ENCODE measurements at regions of chr11 and their contacts with region 1.

Region 1: DNA sequence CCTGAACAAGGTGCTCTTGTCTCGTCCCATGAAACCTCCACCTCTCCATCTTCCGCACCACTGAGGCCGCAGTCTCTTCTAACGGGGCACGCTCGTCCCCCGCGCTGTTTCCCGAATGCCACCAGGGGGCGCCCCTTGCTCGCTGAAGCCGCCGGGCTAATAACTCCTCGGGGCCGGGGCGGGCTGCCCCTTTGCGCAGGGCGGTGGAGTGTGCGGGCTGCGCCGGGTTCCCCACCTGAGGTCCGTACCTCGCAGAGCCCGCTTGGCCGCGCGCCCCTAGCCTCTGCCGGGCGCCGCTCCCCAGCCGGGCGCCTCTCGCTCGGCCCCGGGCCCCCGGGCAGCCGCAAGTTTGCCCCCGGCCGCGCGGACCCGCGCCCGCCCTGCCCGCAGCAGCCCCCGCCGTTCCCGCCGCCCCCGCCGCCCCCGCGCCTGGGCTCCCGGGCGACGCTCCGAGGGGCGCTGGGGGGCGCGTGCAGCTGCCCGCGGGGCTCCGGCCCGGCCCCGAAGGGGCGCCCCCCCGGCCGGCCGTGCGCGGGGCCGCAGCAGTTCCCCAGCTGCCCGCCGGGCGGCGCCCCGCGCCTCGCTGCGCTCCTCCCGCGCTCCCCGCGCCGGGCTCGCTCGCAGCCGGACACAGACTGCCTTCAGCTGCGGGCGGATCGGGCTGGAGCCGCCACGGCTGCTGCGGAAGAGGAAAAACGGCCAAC is at the start of gene GRIK4:
- ATAC-seq: peak; percentile 88 to 95 (median 92)
- H3K4me3 ChIP-seq: peak within 1 kb of the TSS; percentile 53 to 73 (median 63)
- H3K27ac ChIP-seq: peak within 1 kb of the TSS; percentile 39 to 67
- H3K4me1 ChIP-seq: peaks cover 13 to 15% of the 10 kb centered on the region in 2 donors
- total RNA-seq, gene GRIK4: 0.75 to 11.1 (median 1.7) TPM

Region 2: DNA sequence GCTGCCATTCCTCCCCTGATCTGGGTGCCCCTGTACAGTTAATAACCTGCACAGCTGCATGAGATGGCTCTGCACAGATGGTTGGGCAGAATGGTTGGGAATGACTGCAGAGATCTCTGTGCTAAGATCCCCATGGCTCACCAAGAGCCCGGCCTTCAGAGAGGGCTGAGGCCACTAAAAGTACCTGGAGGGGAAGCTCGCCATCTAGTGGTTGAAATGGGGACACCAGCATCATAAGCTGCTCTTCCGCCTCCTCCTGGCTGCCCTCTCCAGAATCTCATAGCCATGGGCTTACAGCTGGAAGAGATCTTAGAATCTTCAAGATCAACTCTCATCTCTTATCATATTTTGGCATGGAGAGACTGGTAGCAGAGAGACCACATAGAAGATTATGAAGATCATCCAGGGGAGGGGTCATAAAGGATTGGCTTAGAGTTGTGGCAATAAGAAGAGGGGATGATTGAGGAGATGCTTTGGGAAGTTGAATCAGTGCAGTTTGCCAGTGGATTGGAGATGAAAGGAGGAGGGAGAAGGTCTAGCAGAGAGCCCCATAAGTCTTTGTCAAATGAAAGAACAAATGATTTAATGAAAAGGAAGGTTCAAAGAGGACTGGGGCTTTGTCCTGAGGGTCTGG is 208.1 kb before region 1 on chr11:
- in situ Hi-C with region 1: no loop called
- ATAC-seq: peak; percentile 8 to 72 (median 42)
- H3K4me3 ChIP-seq: no peak overlapping the region
- H3K27ac ChIP-seq: no peak overlapping the region
- H3K4me1 ChIP-seq: no peaks in the 10 kb centered on the region

Region 3: DNA sequence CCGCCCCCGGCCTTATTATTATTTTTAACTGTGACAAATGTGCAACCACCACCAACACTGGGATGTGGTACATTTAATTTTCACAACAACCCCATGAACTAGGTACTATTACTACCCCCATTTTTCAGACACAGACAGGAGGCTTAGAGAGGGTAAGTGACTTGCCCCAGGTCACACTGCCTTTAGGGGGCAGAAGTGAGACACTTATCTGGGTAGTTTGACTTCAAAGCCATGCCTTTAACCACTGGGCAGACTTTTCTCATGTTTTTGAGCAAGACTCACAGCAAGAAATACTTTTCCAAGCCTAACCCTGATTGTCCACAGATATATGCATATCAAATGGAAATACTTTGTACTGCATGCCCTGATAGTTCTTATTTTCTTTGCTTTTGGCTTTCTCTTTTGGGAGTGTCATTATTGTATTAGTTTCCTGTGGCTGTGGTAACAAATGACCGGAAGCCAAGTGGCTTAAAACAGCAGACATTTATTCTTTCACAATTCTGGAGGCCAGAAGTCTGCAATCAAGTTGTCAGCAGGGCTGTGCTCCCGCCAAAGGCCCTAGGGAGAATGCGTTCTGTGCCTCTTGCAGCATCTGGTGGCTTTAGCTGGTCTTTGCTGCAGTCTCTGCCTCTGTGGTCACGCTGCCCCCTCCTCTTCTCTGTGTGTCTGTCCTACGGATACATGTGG is 111.1 kb after region 1 on chr11:
- in situ Hi-C with region 1: no loop called
- ATAC-seq: peak; percentile 27 to 92 (median 55)
- H3K4me3 ChIP-seq: no peak overlapping the region
- H3K27ac ChIP-seq: no peak overlapping the region
- H3K4me1 ChIP-seq: peaks cover 16 to 19% of the 10 kb centered on the region in 2 donors

Region 4: DNA sequence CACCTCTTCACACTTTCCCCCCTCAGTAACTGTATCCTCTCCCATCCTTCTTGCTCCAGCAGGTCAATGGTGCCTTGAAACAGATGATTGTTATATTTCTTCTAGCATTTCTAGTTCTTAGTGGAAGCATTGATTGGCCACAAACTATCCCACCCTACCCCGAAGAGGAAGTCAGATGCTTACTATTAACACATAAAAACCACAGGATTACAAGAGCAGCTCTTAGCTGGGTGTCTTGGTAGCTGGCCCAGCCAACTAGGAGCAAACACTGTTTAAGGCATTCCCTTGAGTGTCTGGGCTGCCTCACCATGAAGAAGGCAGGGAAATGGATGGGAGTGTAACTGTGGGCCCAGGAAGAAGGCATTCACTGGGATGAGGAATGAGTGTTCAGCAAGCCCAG is 176.9 kb after region 1 on chr11:
- in situ Hi-C with region 1: loop called in 8 of 9 experiments (anchors 5 to 25 kb)
- ATAC-seq: peak in 1 of 8 experiments; percentile 31
- H3K4me3 ChIP-seq: no peak overlapping the region
- H3K27ac ChIP-seq: no peak overlapping the region
- H3K4me1 ChIP-seq: peaks cover 0 to 25% of the 10 kb centered on the region in 2 donors

Region 5: GRCh38 chr11:120696597-120697218 is 185.4 kb after region 1 on chr11:
- in situ Hi-C with region 1: loop called in 7 of 9 experiments (anchors 25 kb)
- ATAC-seq: peak in 2 of 8 experiments; percentile 75 to 89
- H3K4me3 ChIP-seq: no peak overlapping the region
- H3K27ac ChIP-seq: no peak overlapping the region
- H3K4me1 ChIP-seq: peaks cover 17 to 19% of the 10 kb centered on the region in 2 donors

Region 6: DNA sequence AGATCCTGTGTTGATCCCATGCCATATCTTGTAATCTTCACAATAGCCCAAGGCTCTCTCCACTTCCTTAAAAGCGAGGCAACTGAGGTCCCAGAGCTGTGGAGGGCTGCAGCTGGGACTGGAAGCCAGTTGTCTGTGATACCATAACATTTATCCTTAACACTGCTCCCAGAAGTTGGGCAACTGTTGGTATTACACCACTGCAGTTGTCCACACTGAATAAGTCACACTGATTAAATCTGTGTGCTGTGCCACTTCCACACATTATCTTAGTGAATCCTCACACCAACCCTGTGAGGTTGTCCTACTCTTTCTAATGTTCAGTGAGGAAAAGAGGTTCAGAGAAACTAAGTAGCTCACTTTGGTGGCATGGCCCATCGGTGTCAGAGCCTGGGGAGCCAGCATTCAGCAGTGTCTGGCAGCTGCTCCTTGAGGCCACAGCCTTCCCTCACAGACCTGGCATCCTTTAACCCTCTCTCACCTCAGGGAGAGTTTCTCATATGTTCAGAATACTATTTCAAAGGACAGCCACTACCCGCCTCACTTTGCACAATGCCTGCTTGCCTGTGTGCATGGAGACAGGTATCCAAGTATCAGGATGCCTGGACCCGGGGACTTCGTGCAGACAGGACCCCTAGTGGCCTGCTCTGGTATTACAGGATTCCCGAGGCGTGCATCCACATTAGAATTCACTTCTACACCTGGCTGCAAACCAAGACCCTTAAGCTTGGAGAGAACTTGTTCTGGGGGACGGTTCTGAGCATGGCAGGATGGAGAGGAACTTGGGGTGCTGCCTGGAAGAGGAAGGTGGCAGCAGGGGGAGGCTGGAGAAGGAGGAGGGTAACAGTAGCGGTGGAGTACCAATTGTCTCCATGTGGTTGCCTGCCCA is 290.8 kb after region 1 on chr11:
- in situ Hi-C with region 1: loop called in 2 of 9 experiments (anchors 25 kb)
- ATAC-seq: peak; percentile 66 to 96 (median 78)
- H3K4me3 ChIP-seq: no peak overlapping the region
- H3K27ac ChIP-seq: no peak overlapping the region
- H3K4me1 ChIP-seq: peaks cover 0 to 2% of the 10 kb centered on the region in 2 donors

Region 7: GRCh38 chr11:120912504-120912903 is 401.2 kb after region 1 on chr11:
- in situ Hi-C with region 1: loop called in 1 of 9 experiments (anchors 25 kb)
- ATAC-seq: peak in 4 of 8 experiments; percentile 31 to 63 (median 50)
- H3K4me3 ChIP-seq: no peak overlapping the region
- H3K27ac ChIP-seq: no peak overlapping the region
- H3K4me1 ChIP-seq: peaks cover 13 to 34% of the 10 kb centered on the region in 2 donors

Region 8: GRCh38 chr11:120952461-120953434 is 441.5 kb after region 1 on chr11:
- in situ Hi-C with region 1: loop called in 6 of 9 experiments (anchors 5 to 25 kb)
- ATAC-seq: peak; percentile 59 to 87 (median 80)
- H3K4me3 ChIP-seq: no peak overlapping the region
- H3K27ac ChIP-seq: no peak overlapping the region
- H3K4me1 ChIP-seq: peaks cover 20 to 40% of the 10 kb centered on the region in 2 donors

Region 9: GRCh38 chr11:121112498-121113455 is 601.5 kb after region 1 on chr11:
- in situ Hi-C with region 1: loop called in 1 of 9 experiments (anchors 25 kb)
- ATAC-seq: peak; percentile 75 to 96 (median 90)
- H3K4me3 ChIP-seq: no peak overlapping the region
- H3K27ac ChIP-seq: no peak overlapping the region
- H3K4me1 ChIP-seq: peaks cover 7 to 12% of the 10 kb centered on the region in 2 donors

Measured in motor neuron (in vitro differentiated cells).